Adrenal gland (tissue), 19 donors: ENCODE measurements at regions of chr10 and their contacts with region 1.

Region 1: GRCh38 chr10:97280783-97281182 is 11.7 kb downstream of the ARHGAP19 start:
- DNase-seq: no peak
- H3K4me3 ChIP-seq: no peak overlapping the region
- H3K27ac ChIP-seq: no peak overlapping the region
- H3K4me1 ChIP-seq: peaks cover 21% of the 10 kb centered on the region in 2 donors
- H3K27me3 ChIP-seq: no peaks in the 10 kb centered on the region
- CTCF ChIP-seq: no peak
- POLR2A ChIP-seq: no peak

Region 2: GRCh38 chr10:97010695-97011206 is 270.0 kb before region 1 on chr10:
- intact Hi-C with region 1: no loop called
- DNase-seq: no peak
- H3K4me3 ChIP-seq: no peak overlapping the region
- H3K27ac ChIP-seq: no peak overlapping the region
- H3K4me1 ChIP-seq: no peaks in the 10 kb centered on the region
- H3K27me3 ChIP-seq: no peaks in the 10 kb centered on the region
- CTCF ChIP-seq: no peak
- POLR2A ChIP-seq: no peak

Region 3: DNA sequence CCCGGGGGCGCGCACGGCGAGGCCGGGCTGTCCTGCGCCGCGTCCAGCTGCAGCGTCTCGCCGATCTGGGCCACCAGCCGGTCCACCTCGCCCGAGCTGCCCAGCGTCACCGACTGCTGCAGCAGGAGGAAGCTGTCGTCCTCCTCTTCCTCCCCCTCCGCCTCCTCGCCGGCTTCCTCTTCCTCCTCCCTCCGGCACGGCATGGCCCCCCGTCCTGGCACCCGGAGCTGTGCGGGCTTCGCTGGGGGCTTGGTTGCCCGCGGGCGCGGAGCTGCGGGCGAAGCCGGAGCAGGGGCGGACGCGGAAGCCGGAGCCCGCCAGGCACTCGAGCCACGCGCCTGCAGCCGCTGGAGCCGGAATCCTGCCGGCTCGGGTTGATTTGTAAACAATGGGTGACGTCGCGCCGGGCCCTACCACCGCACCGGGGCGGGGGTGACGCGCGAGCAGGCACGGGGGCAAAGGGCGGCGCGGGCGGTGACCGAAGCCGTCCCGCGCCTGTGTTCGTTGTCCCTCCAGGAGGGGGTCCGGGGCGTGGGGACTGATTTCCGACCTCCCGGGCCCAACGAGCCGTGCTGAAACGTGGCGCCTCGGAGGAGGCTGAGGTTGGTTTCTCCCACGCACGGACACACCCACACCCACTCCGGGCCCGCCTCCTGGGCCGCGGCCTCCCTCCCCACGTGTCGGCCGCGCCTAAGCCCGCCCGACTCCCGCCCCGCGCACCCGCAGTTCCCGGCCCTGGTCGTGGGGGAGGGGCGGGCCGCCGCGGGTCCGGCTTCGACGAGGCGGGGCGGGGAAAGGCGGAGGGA is 53.8 kb after region 1 on chr10 and contains the start of gene FRAT2:
- intact Hi-C with region 1: loop called in 1 of 2 experiments (anchors 10 kb)
- DNase-seq: peak; percentile 90 to 94 (median 93)
- H3K4me3 ChIP-seq: peak within 1 kb of the TSS; percentile 65 to 88 (median 80)
- H3K27ac ChIP-seq: peak within 1 kb of the TSS; percentile 82 to 97 (median 93)
- H3K4me1 ChIP-seq: peaks cover 15 to 18% of the 10 kb centered on the region in 2 donors
- H3K27me3 ChIP-seq: no peaks in the 10 kb centered on the region
- CTCF ChIP-seq: peak in 1 of 6 experiments; percentile 1
- POLR2A ChIP-seq: peak; percentile 55 to 95
- total RNA-seq, gene FRAT2: 3.4 to 17.9 (median 10.0) TPM

Region 4: DNA sequence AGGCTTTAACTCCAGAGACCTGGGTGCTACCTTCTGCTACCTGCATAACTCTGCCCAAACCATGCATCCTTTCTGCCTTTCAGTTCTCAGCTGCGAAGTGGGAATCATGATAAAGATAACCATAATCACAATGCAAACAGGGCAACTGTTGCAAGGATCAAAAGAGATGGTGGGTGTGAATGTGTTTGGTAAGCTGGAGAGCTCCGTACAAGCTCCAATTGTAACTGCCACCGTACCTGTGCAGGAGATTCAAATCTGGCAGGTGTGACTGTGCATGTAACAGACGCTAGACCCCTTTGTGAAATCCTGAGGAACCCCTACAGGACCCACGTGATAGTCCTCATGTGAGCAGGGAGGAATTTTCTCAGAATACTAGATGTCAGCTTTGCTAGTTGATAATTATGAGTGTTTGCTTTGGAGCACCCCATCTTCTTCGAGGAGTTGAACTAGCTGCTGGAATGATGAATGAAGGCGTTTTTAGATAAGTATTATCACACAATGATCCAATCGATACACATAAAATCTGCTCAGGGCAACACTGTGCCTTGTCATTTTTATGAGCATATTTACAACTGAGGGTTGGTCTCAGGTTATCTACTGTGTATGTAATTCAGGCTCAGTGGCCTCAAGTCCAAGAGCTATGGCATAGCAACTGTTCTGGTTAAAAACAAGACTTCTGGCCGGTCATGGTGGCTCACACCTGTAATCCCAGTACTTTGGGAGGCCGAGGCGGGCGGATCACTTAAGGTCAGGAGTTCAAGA is 69.2 kb after region 1 on chr10:
- intact Hi-C with region 1: loop called in 1 of 2 experiments (anchors 10 kb)
- DNase-seq: no peak
- H3K4me3 ChIP-seq: no peak overlapping the region
- H3K27ac ChIP-seq: no peak overlapping the region
- H3K4me1 ChIP-seq: no peaks in the 10 kb centered on the region
- H3K27me3 ChIP-seq: no peaks in the 10 kb centered on the region
- CTCF ChIP-seq: no peak
- POLR2A ChIP-seq: no peak